ENCODE measurements at regions of chr3 and their contacts with region 1.

Region 1: DNA sequence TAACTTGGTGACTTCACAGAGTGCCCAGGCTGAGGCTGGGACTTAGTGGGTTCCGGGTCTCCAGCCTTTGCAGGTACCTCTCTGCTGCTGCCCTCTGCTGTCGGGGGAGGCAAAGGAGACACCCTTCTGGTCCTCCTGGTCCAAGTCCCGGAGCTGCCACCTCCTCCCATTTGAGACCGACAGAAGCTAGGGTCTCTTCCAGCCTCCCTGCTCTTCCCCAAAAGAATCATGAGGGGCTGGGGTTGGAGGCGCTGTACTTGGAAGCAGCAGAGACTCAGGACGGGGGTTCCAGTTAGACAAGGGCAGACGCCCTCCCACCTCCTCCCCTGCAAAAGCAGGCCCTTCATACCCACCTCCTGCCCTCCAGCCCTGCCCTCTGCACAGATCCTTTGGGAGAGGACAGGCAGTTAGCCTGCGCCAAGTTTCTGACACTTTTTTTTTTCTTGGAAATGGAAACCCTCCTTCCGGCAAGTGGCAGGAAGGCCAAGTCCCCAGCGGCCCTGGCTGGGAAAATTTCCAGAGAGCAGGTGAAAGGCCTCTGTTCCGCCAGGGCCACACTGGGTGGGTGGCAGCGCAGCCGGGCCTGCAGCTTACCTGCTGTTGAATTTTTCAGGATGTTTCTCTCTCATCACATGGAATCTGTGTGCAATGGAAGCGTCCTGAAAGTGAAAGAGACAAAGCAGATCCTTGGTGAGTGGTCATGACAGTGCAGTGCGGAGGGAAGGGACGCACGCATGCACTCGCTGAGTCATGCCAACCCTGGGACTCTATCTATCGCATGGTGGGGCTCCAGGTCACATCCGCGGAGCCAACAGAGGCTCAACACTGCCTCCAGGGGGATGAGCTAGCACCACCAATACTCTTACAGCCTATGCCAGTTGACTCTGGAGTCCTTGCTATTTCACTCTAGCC is 119.9 kb downstream of the DGKG start:
- DNase-seq: peak; percentile 33
- H3K4me3 ChIP-seq: no peak overlapping the region
- H3K27ac ChIP-seq: no peak overlapping the region
- H3K4me1 ChIP-seq: no peaks in the 10 kb centered on the region
- H3K27me3 ChIP-seq: no peaks in the 10 kb centered on the region
- CTCF ChIP-seq: peak; percentile 24 to 55
- POLR2A ChIP-seq: no peak

Region 2: DNA sequence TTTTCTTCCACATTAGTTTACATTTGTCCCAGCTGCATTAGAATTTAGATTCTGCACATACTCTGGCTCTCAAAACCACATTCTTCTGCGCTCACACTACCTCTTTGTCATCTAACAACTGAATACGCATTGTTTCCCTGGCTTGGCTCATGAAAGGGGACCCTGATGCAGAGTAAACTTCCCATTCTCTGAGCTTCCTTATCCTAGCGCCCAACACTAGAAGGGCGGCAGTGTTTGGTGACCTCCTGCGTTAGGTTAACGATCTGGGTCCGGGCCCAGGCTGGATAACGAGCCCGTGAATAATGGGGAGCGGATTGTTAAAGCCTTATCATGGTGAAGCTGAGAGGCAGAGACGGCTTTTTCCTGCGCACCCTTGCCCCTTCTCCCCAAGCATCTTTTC is 197.2 kb before region 1 on chr3:
- CTCF ChIA-PET with region 1: interaction called, 4 read pairs
- POLR2A ChIA-PET with region 1: no interaction called
- dilution Hi-C with region 1: no loop called
- intact Hi-C with region 1: loop called (anchors 1 kb)
- DNase-seq: peak; percentile 99
- H3K4me3 ChIP-seq: no peak overlapping the region
- H3K27ac ChIP-seq: peak overlapping the region; percentile 28
- H3K4me1 ChIP-seq: peaks cover 10% of the 10 kb centered on the region
- H3K27me3 ChIP-seq: peaks cover 0 to 4% of the 10 kb centered on the region in 2 experiments
- CTCF ChIP-seq: no peak
- POLR2A ChIP-seq: no peak

Measured in endothelial cell of umbilical vein (primary cell).